Heart right ventricle (tissue), 16 donors: ENCODE measurements at regions of chr17 and their contacts with region 1.

Region 1: DNA sequence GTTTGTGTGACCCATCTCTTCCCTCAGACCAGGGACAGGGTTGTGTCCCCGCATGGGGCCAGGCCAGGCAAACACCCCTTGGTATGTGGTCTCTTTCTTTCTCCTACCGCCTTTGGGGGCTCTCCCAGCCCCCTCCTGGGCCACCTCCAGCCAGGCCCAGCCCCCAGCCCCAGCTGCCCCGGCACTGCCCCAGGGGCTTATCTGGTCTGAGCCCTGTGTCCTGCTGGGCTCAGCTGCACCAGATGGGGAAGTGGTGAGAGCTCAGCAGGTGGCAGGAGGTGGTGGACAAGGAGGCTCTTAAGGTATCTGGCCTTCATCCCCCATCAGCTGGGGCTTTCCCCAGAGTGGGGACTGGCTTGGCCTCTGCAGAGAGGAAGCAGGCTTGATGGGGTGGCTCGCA is 8.7 kb downstream of the ADAM11 start:
- DNase-seq: no peak
- ATAC-seq: no peak
- H3K4me3 ChIP-seq: no peak overlapping the region
- H3K27ac ChIP-seq: no peak overlapping the region
- H3K4me1 ChIP-seq: peaks cover 0 to 4% (median 0%) of the 10 kb centered on the region in 9 donors
- H3K27me3 ChIP-seq: peaks cover 0 to 3% (median 0%) of the 10 kb centered on the region in 7 donors
- CTCF ChIP-seq: no peak

Region 2: GRCh38 chr17:44832805-44833204 is 65.3 kb after region 1 on chr17:
- intact Hi-C with region 1: no loop called
- DNase-seq: no peak
- ATAC-seq: no peak
- H3K4me3 ChIP-seq: no peak overlapping the region
- H3K27ac ChIP-seq: no peak overlapping the region
- H3K4me1 ChIP-seq: peaks cover 0 to 25% (median 17%) of the 10 kb centered on the region in 9 donors
- H3K27me3 ChIP-seq: peaks cover 0 to 54% (median 8%) of the 10 kb centered on the region in 7 donors
- CTCF ChIP-seq: no peak

Region 3: GRCh38 chr17:45184144-45184543 is 416.7 kb after region 1 on chr17:
- intact Hi-C with region 1: loop called in 1 of 10 experiments (anchors 10 kb)
- DNase-seq: no peak
- ATAC-seq: no peak
- H3K4me3 ChIP-seq: no peak overlapping the region
- H3K27ac ChIP-seq: no peak overlapping the region
- H3K4me1 ChIP-seq: no peaks in the 10 kb centered on the region
- H3K27me3 ChIP-seq: no peaks in the 10 kb centered on the region
- CTCF ChIP-seq: no peak